ENCODE measurements at regions of chr20 and their contacts with region 1.

Region 1: DNA sequence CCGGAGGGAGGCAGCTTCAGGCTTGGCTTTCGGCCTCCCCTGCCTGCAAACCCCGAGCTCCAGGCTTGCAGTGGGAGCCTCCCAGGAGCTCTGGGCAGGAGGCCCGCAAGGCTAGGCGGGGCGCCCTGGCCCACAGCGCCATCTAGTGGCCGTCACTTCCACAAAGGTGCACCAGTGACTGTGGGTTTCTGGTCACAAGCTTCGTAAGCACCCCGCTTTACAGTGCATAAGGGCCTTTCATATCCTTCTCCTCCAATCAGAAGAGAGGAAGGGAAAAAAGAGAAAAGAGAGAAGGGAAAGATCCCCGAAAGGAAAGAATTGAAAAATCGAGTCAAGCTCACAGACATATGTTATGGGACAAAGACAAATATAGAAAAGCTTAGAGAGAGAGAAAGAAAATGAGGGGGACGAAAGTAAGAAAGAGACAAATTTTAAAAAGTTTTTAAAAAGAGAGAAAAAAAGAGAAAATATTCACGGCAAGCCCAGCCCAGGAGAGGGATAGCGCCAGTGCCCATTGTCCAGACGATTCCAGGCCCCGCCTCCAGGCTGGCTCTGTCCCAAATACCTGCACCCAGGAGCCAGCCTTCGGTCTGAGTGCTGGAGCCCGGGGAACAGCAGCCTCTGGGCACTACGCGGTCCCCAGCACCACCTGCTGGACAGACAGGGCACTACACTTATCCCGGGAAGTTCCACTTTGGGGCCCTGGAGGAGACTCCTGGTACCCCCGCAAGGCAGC is 207.1 kb downstream of the PREX1 start:
- DNase-seq: peak; percentile 87
- CTCF ChIP-seq: peak; percentile 90

Region 2: DNA sequence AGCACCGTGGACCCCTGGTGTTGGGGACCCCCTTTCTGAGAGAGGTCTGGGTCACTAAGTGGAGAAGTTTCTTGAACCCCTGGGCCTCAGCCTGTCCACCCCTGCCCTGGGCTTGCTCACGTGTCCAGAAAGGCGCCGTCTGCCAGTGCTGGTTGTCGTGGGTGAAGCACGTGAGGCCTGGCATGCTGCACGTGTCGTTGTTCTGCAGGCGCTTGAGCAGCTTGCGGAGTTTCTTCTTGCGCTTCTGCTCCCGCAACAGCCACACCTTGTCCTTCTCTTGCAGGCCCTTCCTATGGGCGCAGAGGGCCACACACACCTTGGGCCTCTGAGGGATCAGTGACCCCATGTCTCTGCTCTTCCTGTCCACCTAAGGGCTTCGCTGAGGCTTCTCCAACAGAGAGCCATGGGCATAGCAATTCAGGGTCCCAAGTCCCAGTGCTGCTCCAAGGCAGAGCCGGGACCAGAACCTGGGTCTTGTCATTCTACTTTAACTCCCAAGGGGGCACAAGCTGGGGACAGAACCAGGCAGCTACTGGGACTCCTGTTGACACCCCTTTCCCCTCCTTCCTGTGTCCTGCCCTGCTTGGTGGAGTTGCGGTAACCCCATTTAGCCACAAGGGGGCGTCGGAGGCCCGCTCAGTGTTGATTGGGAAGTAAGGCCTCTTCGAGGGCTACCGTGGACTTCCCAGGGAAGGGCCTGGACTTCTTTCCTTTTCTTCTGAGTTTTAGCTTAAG is 957.2 kb before region 1 on chr20:
- CTCF ChIA-PET with region 1: interaction called, 77 read pairs
- POLR2A ChIA-PET with region 1: interaction called, 4 read pairs
- DNase-seq: peak; percentile 84
- CTCF ChIP-seq: peak; percentile 97

Region 3: DNA sequence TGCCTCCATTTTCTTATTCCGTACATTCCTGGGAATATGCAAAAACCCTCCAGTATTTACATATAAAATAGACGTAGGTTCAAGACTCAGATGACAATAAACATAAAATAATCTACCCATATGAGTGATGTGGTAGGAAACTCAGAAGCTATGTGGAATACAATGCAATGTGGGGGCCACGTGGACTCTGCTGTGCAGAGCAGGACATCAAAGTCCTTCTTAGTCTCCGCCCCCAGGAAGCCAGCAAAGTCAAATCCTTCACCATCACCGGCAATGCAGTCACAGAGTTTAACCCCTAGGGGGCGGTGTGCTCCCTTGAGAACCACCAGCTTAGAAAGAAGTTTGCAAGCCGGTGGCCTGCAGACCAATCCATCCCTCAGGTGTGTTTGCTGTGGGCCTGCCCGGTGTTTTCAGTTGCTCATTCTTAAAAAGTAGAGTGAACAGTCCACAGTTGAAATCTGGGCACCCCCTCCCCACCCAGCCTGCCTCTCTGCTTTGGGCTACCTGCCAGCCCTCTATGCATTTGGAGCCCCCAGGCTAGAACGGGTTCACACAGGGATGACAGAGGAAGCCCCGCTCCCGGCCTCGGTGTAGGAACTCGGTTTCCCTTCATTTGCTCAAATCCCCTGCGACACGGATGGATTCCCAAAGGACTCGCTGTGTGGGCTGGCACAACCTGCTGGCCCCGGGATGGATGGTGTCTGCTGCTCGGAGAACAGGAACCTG is 895.3 kb before region 1 on chr20:
- CTCF ChIA-PET with region 1: interaction called, 58 read pairs
- POLR2A ChIA-PET with region 1: no interaction called
- DNase-seq: peak; percentile 87
- CTCF ChIP-seq: peak; percentile 82

Region 4: GRCh38 chr20:47854163-47854562 is 766.5 kb before region 1 on chr20:
- CTCF ChIA-PET with region 1: interaction called, 13 read pairs
- POLR2A ChIA-PET with region 1: no interaction called
- DNase-seq: no peak
- CTCF ChIP-seq: no peak

Region 5: GRCh38 chr20:48339190-48340062 is 281.3 kb before region 1 on chr20:
- CTCF ChIA-PET with region 1: interaction called, 18 read pairs
- POLR2A ChIA-PET with region 1: no interaction called
- DNase-seq: peak; percentile 54
- CTCF ChIP-seq: no peak

Region 6: DNA sequence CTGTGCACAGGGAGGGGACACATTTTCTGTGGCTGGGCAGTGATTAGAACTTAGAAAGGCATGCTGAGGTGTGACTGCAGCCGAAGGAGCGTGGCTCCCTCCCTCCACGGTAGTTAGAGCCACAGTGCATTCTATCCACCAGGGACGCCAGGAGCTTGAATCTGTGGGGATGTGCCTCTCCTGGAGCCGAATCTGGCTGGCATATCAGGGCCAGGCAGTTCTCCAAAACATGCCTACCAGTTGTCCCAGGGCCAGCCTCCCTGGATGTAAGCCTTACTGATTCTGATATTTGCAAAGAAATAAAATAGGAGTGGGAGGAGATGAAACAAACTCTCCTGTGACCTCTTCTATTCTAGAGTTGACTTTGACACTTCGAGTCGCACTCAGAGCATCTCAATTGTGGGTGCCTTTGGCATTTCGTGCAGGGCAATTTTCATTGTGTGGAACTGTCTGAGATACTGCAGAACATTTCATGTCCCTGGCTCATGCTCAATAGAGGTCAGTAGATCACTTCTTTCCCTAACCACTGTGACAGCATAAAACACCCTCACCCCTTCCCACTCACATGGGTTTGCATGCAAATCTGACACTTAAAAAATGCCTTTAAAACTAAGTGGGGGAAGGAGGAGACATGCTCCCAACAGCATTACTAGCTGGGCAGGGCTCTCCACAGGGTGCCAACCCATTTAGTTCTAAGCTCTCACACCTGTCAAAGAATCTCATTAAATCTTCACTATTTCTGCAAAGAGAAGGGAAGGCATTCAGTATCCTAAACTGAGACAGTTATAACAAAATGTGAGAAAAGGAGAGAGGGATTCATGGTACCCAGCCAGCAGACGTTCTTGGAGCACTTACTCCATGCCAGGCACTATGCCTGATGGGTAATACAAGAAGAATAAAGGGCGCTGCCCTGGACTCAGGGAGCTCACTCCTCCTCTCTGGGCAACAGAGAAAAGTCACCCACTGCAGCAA is 171.8 kb before region 1 on chr20:
- CTCF ChIA-PET with region 1: interaction called, 20 read pairs
- POLR2A ChIA-PET with region 1: no interaction called
- DNase-seq: no peak
- CTCF ChIP-seq: peak; percentile 36

Region 7: GRCh38 chr20:48595495-48596338 is 25.0 kb before region 1 on chr20:
- CTCF ChIA-PET with region 1: interaction called, 19 read pairs
- POLR2A ChIA-PET with region 1: no interaction called
- DNase-seq: no peak
- CTCF ChIP-seq: no peak

Measured in GM10248 (cell line).